PC-3 (cell line): ENCODE measurements at regions of chr10 and their contacts with region 1.

Region 1: GRCh38 chr10:93288654-93289634 is 193.2 kb downstream of the MYOF start:
- DNase-seq: peak; percentile 92
- ATAC-seq: peak; percentile 97
- H3K4me3 ChIP-seq: no peak overlapping the region
- H3K27ac ChIP-seq: no peak overlapping the region
- H3K4me1 ChIP-seq: peaks cover 10% of the 10 kb centered on the region
- H3K27me3 ChIP-seq: no peaks in the 10 kb centered on the region
- CTCF ChIP-seq: peak; percentile 75

Region 2: GRCh38 chr10:92886334-92886961 is 402.5 kb before region 1 on chr10:
- CTCF ChIA-PET with region 1: no interaction called
- POLR2A ChIA-PET with region 1: no interaction called
- intact Hi-C with region 1: loop called (anchors 5 kb)
- DNase-seq: peak; percentile 35
- ATAC-seq: peak; percentile 40; the same call in 1 of the 2 replicates
- H3K4me3 ChIP-seq: no peak overlapping the region
- H3K27ac ChIP-seq: no peak overlapping the region
- H3K4me1 ChIP-seq: peaks cover 17% of the 10 kb centered on the region
- H3K27me3 ChIP-seq: no peaks in the 10 kb centered on the region
- CTCF ChIP-seq: no peak

Region 3: DNA sequence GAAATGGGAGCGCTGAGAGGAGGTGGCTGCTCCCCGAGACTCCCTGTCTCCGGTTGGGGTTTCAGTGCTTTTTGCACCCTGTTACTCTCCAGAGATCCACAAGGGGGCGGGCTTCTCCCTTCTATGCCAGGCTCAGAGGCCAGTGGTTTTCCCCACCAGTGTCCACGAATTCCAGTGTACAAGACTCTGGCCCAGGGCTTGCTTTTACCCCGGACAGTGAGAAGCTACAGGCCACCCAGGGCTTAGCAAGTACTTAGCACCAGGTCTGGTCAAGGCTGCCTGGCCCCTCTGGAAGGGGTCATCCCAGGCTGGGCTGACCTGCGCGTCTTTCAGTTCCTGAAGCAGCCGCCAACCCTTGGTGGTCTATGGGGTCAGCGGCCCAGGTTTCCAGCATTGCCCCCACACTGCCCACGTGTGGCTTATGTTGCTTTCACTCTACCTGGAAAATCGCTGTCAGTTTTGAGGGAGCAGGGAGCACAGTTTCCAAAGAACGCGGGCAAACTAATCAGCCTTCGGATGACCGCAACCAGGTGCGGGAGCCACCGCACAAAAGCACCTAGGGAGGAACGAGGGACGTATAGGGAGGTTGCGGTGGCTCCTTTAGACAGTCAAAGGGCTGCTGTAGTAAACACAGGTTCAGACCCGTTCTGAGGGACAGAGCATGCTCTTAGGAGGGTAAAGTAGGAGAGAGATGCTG is 208.4 kb before region 1 on chr10:
- CTCF ChIA-PET with region 1: no interaction called
- POLR2A ChIA-PET with region 1: no interaction called
- intact Hi-C with region 1: loop called (anchors 1 kb)
- DNase-seq: peak; percentile 48
- ATAC-seq: peak; percentile 62
- H3K4me3 ChIP-seq: peak overlapping the region; percentile 37; the same call in 1 of the 2 replicates
- H3K27ac ChIP-seq: no peak overlapping the region
- H3K4me1 ChIP-seq: no peaks in the 10 kb centered on the region
- H3K27me3 ChIP-seq: no peaks in the 10 kb centered on the region
- CTCF ChIP-seq: peak; percentile 81

Region 4: GRCh38 chr10:93115661-93116383 is 173.1 kb before region 1 on chr10:
- CTCF ChIA-PET with region 1: no interaction called
- POLR2A ChIA-PET with region 1: no interaction called
- intact Hi-C with region 1: loop called (anchors 1 kb)
- DNase-seq: peak; percentile 70
- ATAC-seq: peak; percentile 64
- H3K4me3 ChIP-seq: no peak overlapping the region
- H3K27ac ChIP-seq: no peak overlapping the region
- H3K4me1 ChIP-seq: no peaks in the 10 kb centered on the region
- H3K27me3 ChIP-seq: no peaks in the 10 kb centered on the region
- CTCF ChIP-seq: peak; percentile 48

Region 5: DNA sequence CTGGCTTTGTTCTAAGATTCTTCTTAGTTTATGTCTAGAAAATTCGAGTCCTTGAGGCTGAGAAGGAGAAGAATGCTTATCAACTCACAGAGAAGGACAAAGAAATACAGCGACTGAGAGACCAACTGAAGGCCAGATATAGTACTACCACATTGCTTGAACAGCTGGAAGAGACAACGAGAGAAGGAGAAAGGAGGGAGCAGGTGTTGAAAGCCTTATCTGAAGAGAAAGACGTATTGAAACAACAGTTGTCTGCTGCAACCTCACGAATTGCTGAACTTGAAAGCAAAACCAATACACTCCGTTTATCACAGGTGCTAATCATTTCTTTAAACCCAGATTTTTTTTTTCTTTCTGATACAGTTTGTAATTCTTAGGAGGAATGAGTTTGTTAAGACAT is 214.1 kb after region 1 on chr10:
- CTCF ChIA-PET with region 1: no interaction called
- POLR2A ChIA-PET with region 1: no interaction called
- intact Hi-C with region 1: no loop called
- DNase-seq: no peak
- ATAC-seq: no peak
- H3K4me3 ChIP-seq: no peak overlapping the region
- H3K27ac ChIP-seq: no peak overlapping the region
- H3K4me1 ChIP-seq: peaks cover 7% of the 10 kb centered on the region; the same call in 1 of the 2 replicates
- H3K27me3 ChIP-seq: no peaks in the 10 kb centered on the region
- CTCF ChIP-seq: no peak